Activated B cell treated with CpG ODN at 0.5 μM for 24 hours (primary cell): ENCODE measurements at regions of chr3 and their contacts with region 1.

Region 1: GRCh38 chr3:70550723-70551319 is 238.4 kb upstream of the MDFIC2 start:
- DNase-seq: peak; percentile 61
- ATAC-seq: peak; percentile 75
- H3K4me3 Mint-ChIP-seq: no peak overlapping the region
- H3K27ac Mint-ChIP-seq: no peak overlapping the region
- H3K4me1 Mint-ChIP-seq: no peaks in the 10 kb centered on the region
- H3K27me3 Mint-ChIP-seq: peaks cover 4% of the 10 kb centered on the region
- CTCF ChIP-seq: no peak

Region 2: DNA sequence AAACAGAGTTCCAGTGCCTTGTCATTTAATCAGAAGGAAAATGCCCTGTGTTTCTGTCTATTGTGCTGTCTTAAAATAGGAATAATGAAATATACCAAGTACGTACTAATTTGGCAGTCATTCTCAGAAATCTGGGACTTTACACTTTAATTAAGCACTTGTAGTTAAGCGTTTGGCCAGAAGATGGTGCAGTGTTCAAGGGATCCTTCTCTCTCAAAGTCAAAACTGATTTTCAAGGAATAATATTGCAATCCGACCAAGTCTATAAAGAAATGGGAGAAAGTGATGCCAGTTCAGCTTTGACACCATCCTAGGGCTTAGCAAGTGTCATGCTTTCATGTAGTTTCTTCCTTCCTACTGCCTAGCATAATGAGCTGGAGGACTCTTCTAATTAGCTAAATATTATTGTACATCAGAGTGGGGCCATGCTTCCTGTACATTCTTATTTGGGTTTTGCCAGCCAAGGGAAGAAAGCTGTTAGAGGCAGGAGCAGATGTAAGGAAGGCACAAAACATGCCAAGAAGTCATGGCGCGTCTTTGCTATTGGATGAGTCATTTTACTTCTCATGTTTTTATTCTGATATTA is 486.5 kb before region 1 on chr3:
- CTCF ChIA-PET with region 1: no interaction called
- POLR2A ChIA-PET with region 1: no interaction called
- intact Hi-C with region 1: loop called (anchors 1 kb)
- DNase-seq: no peak
- ATAC-seq: no peak
- H3K4me3 Mint-ChIP-seq: no peak overlapping the region
- H3K27ac Mint-ChIP-seq: no peak overlapping the region
- H3K4me1 Mint-ChIP-seq: no peaks in the 10 kb centered on the region
- H3K27me3 Mint-ChIP-seq: peaks cover 2% of the 10 kb centered on the region
- CTCF ChIP-seq: peak; percentile 79

Region 3: DNA sequence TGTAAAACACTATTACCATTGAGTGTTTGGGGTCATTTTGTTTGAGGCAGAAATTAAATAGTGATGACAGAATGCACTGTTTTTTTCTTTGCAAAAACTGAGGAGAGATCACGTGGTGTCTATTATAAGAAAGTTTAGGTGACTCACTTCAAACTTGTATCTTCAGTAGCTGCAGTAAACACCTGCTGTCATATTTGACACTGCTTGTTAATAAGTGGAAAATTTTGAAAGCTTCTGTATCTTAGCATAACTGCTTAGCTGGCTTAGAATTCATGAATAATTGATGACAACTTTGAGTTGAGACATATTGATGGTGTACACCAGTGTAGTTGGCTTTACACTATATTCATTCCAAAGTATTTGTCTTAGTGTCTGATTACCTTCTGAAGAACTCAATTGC is 208.7 kb before region 1 on chr3:
- CTCF ChIA-PET with region 1: no interaction called
- POLR2A ChIA-PET with region 1: no interaction called
- intact Hi-C with region 1: no loop called
- DNase-seq: no peak
- ATAC-seq: no peak
- H3K4me3 Mint-ChIP-seq: no peak overlapping the region
- H3K27ac Mint-ChIP-seq: no peak overlapping the region
- H3K4me1 Mint-ChIP-seq: no peaks in the 10 kb centered on the region
- H3K27me3 Mint-ChIP-seq: peaks cover 4% of the 10 kb centered on the region
- CTCF ChIP-seq: no peak

Region 4: GRCh38 chr3:71142440-71143161 is 591.8 kb after region 1 on chr3:
- CTCF ChIA-PET with region 1: no interaction called
- POLR2A ChIA-PET with region 1: no interaction called
- intact Hi-C with region 1: loop called (anchors 10 kb)
- DNase-seq: no peak
- ATAC-seq: peak; percentile 72
- H3K4me3 Mint-ChIP-seq: no peak overlapping the region
- H3K27ac Mint-ChIP-seq: peak overlapping the region; percentile 74
- H3K4me1 Mint-ChIP-seq: peaks cover 39% of the 10 kb centered on the region
- H3K27me3 Mint-ChIP-seq: no peaks in the 10 kb centered on the region
- CTCF ChIP-seq: no peak

Region 5: GRCh38 chr3:71681224-71681668 is 1130.4 kb after region 1 on chr3:
- CTCF ChIA-PET with region 1: interaction called, 14 read pairs
- POLR2A ChIA-PET with region 1: no interaction called
- intact Hi-C with region 1: loop called (anchors 1 kb)
- DNase-seq: no peak
- ATAC-seq: no peak
- H3K4me3 Mint-ChIP-seq: no peak overlapping the region
- H3K27ac Mint-ChIP-seq: no peak overlapping the region
- H3K4me1 Mint-ChIP-seq: no peaks in the 10 kb centered on the region
- H3K27me3 Mint-ChIP-seq: no peaks in the 10 kb centered on the region
- CTCF ChIP-seq: no peak